Right cardiac atrium (tissue), 5 donors: ENCODE measurements at regions of chr11 and their contacts with region 1.

Region 1: DNA sequence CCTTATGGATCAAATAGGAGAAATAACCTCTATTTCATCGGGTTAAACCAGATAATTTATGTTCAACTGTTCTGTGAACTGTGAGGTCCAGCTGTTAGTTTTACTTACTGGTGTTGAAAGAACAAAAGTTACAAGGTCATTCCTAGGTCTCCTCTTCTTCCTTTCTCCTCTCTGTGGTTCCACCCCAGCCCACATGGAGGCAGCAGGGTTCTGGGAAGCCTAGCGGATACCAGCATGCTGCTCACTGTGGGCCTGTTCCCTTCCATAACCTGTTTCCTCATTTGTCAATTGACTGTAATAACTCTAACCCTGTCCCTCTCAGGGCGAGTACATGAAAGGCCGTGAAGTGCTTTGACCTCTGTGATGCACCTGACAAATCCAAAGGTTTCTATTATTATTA is 27.8 kb downstream of the RELT start:
- DNase-seq: peak; percentile 74 to 89 (median 88)
- ATAC-seq: peak; percentile 76 to 82
- H3K4me3 ChIP-seq: no peak overlapping the region
- H3K27ac ChIP-seq: no peak overlapping the region
- H3K4me1 ChIP-seq: no peaks in the 10 kb centered on the region
- H3K27me3 ChIP-seq: no peaks in the 10 kb centered on the region

Region 2: GRCh38 chr11:73372371-73372993 is 31.6 kb before region 1 on chr11:
- intact Hi-C with region 1: no loop called
- DNase-seq: no peak
- ATAC-seq: no peak
- H3K4me3 ChIP-seq: no peak overlapping the region
- H3K27ac ChIP-seq: peak overlapping the region; percentile 41
- H3K4me1 ChIP-seq: no peaks in the 10 kb centered on the region
- H3K27me3 ChIP-seq: no peaks in the 10 kb centered on the region

Region 3: GRCh38 chr11:73463359-73463758 is 59.3 kb after region 1 on chr11:
- intact Hi-C with region 1: loop called in 1 of 4 experiments (anchors 10 kb)
- DNase-seq: no peak
- ATAC-seq: no peak
- H3K4me3 ChIP-seq: no peak overlapping the region
- H3K27ac ChIP-seq: no peak overlapping the region
- H3K4me1 ChIP-seq: peaks cover 3% of the 10 kb centered on the region
- H3K27me3 ChIP-seq: no peaks in the 10 kb centered on the region

Region 4: GRCh38 chr11:73597956-73598718 is 194.1 kb after region 1 on chr11 and contains the start of gene FAM168A:
- intact Hi-C with region 1: loop called in 1 of 4 experiments (anchors 10 kb)
- DNase-seq: peak; percentile 97 to 99 (median 99)
- ATAC-seq: peak; percentile 99
- H3K4me3 ChIP-seq: peak within 1 kb of the TSS; percentile 95
- H3K27ac ChIP-seq: peak within 1 kb of the TSS; percentile 87
- H3K4me1 ChIP-seq: peaks cover 12% of the 10 kb centered on the region
- H3K27me3 ChIP-seq: no peaks in the 10 kb centered on the region
- total RNA-seq, gene FAM168A: 35.8 to 46.2 (median 41.2) TPM

Region 5: GRCh38 chr11:73652046-73652730 is 248.1 kb after region 1 on chr11:
- intact Hi-C with region 1: loop called in 2 of 4 experiments (anchors 10 kb)
- DNase-seq: peak in 2 of 3 donors; percentile 36 to 62
- ATAC-seq: peak in 1 of 2 donors; percentile 28
- H3K4me3 ChIP-seq: no peak overlapping the region
- H3K27ac ChIP-seq: no peak overlapping the region
- H3K4me1 ChIP-seq: no peaks in the 10 kb centered on the region
- H3K27me3 ChIP-seq: no peaks in the 10 kb centered on the region

Region 6: DNA sequence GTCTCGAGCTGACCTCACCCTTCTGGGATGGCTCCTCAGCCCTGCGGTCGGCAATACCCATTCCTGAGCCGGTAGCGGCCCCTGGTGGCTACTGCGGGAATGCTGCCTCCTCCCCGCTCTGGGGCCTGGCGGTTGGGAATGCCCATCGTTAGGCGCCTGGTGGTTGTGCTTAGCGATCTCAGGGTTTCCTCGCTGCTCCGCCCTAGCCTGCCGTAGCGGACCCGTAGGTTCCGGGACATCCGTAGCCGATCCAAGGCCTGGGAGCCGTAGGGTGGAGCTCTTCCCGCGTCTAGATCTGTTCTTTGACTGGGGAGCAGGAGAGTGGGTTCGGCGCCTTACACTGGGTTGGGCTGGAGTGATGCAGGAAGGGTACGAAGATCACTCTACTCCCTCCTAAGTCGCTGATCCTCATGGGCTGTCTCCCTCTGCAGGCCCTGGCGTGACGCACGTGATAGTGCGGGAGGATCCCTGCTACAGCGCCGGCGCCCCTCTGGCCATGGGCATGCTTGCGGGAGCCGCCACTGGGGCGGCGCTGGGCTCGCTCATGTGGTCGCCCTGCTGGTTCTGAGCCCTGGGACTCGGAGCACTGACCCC is 257.1 kb after region 1 on chr11:
- intact Hi-C with region 1: loop called (anchors 2 to 10 kb)
- DNase-seq: peak; percentile 87 to 97 (median 96)
- ATAC-seq: peak; percentile 96
- H3K4me3 ChIP-seq: peak overlapping the region; percentile 16
- H3K27ac ChIP-seq: no peak overlapping the region
- H3K4me1 ChIP-seq: peaks cover 6% of the 10 kb centered on the region
- H3K27me3 ChIP-seq: no peaks in the 10 kb centered on the region